GM23248 (cell line): ENCODE measurements at regions of chr7 and their contacts with region 1.

Region 1: GRCh38 chr7:31735991-31736982 is 49.3 kb downstream of the PPP1R17 start:
- DNase-seq: peak; percentile 73
- H3K4me3 ChIP-seq: no peak overlapping the region
- H3K27ac ChIP-seq: no peak overlapping the region
- H3K4me1 ChIP-seq: peaks cover 3% of the 10 kb centered on the region; the same call in 1 of the 2 replicates
- H3K27me3 ChIP-seq: no peaks in the 10 kb centered on the region; the same call in 1 of the 2 replicates

Region 2: DNA sequence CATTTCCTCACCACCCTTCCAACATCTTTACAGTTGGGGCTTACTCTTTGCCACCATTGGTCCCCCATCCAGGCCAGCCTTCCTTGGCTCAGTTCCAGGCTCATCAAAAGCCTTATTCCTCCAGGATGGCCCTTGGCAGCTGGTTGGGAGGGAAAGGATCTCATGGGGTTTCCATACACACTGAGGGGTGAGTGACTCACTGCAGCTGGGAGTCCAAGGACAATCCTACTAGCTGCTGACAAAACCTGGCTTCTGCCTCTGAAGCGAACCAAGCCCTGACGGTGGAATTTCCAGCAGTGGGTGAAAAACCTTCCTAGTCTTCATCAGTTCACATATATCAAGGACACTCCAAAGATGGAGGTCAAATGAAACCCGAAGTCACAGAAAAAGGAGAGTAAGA is 1077.0 kb before region 1 on chr7:
- in situ Hi-C with region 1: no loop called
- DNase-seq: peak; percentile 18
- H3K4me3 ChIP-seq: no peak overlapping the region
- H3K27ac ChIP-seq: no peak overlapping the region
- H3K4me1 ChIP-seq: no peaks in the 10 kb centered on the region
- H3K27me3 ChIP-seq: 0 out of 2 replicates have a peak, but pooled peaks cover 12% of the 10 kb centered on the region

Region 3: GRCh38 chr7:31134246-31135188 is 601.8 kb before region 1 on chr7:
- in situ Hi-C with region 1: loop called (anchors 10 kb)
- DNase-seq: peak; percentile 81
- H3K4me3 ChIP-seq: no peak overlapping the region
- H3K27ac ChIP-seq: no peak overlapping the region
- H3K4me1 ChIP-seq: no peaks in the 10 kb centered on the region
- H3K27me3 ChIP-seq: peaks cover 7% of the 10 kb centered on the region

Region 4: DNA sequence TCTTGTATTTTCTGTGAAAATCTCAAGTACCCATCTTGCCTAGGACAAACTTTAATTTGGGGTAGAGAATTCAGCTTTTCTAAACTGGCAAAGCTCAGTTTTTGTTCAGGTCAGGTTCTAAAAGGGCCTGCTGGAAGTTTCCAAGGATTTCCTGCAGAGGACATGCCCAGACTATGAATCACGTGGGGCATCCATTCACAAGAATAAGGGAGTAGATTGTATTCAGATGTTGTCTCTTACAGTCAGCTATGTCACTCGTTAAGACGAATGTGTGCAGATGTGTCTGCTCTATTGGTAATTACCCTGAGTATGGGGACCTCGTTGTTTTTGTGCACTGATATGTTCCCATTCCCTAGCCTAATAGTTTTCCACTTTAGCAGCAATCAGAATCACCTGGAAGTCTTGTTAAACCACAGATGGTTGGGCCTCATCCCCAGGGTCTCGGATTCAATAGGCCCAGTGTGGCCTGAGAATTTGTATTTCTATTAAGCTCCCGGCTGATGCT is 303.4 kb before region 1 on chr7:
- in situ Hi-C with region 1: loop called (anchors 10 kb)
- DNase-seq: peak; percentile 7
- H3K4me3 ChIP-seq: no peak overlapping the region
- H3K27ac ChIP-seq: no peak overlapping the region
- H3K4me1 ChIP-seq: no peaks in the 10 kb centered on the region
- H3K27me3 ChIP-seq: no peaks in the 10 kb centered on the region